ENCODE measurements at regions of chr14 and their contacts with region 1.

Region 1: DNA sequence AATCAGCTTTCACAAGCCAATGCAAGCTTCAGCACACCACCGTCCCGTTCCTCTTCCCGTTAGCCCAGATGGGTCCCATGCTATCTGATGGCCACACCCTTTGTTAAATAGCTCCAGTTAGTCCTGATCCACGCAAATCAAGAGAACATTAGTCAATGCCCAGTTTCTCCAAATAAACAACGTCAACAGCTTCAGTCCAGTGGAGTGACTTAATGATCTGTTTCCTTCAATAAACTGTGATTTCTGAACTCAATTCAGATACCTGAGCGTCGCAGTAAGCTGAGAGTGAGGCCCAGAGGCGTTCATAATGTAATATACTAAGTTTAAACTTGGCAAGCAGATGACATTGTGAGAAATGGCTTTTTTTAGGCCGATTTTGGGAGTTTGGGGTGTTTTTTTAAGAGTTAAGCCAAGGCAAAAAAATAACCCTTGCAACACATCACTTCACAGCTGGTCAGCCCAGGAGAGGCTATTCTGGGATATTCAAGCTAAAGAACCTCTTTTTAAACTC is 112.3 kb downstream of the ZFP36L1 start:
- DNase-seq: no peak
- CTCF ChIP-seq: no peak

Region 2: GRCh38 chr14:68506021-68506644 is 174.5 kb before region 1 on chr14:
- CTCF ChIA-PET with region 1: no interaction called
- POLR2A ChIA-PET with region 1: no interaction called
- DNase-seq: no peak
- CTCF ChIP-seq: no peak

Region 3: GRCh38 chr14:68663385-68664076 is 17.1 kb before region 1 on chr14:
- CTCF ChIA-PET with region 1: interaction called, 16 read pairs
- POLR2A ChIA-PET with region 1: no interaction called
- DNase-seq: peak; percentile 68
- CTCF ChIP-seq: no peak